Ascending aorta (tissue), 2 donors: ENCODE measurements at regions of chr18 and their contacts with region 1.

Region 1: DNA sequence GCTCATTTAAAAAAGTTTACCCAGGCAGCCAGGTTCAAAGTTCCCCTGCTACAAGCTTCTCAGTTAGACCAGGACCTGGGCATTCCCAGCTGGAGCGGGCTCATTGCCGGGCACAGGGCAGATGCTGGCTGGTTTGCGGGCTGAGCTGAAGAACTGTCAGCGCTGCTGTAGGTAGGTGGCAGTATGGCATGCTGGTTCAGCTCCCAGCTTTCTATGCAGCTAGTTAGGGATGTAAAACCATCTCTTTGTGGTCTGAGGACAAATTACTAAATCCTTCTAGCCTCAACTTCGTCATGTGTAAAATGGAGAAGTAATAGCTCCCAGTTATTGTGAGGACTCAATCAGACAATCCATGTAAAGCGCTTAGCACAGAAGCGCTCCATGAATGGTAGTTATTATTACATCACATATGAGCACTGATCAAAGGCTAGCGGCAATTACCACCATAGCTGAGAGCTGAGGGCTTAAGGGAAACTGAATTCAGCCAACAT is 2.4 kb upstream of the LDLRAD4 start:
- DNase-seq: peak; percentile 43 to 92
- H3K4me3 ChIP-seq: peak overlapping the region; percentile 68 to 91
- H3K27ac ChIP-seq: peak overlapping the region; percentile 69 to 92
- H3K4me1 ChIP-seq: peaks cover 0 to 9% of the 10 kb centered on the region in 2 donors
- H3K27me3 ChIP-seq: no peaks in the 10 kb centered on the region
- CTCF ChIP-seq: peak; percentile 64 to 83 (median 82)

Region 2: DNA sequence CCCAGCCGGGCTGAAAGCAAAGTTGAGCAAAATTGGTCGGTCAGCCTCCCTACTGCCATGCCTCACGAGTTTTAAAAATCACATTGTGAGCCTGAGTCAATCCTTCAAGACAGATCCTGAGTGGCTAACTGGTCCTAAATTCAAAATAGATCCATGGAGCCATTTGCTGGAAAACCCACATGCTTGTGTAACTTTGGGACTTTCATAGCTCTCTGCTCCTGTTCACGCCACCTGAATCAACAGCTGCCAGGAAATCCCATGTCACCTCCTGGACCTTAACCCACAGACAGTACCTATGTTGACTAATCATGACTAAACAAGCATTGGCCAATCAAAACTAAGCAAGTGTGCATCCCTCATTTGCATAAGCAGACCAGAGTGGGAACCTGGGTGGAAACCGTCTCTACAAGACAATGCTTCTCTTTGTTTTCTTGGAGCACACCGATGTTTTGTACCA is 40.4 kb before region 1 on chr18:
- intact Hi-C with region 1: no loop called
- DNase-seq: no peak
- H3K4me3 ChIP-seq: no peak overlapping the region
- H3K27ac ChIP-seq: no peak overlapping the region
- H3K4me1 ChIP-seq: no peaks in the 10 kb centered on the region
- H3K27me3 ChIP-seq: no peaks in the 10 kb centered on the region
- CTCF ChIP-seq: no peak

Region 3: DNA sequence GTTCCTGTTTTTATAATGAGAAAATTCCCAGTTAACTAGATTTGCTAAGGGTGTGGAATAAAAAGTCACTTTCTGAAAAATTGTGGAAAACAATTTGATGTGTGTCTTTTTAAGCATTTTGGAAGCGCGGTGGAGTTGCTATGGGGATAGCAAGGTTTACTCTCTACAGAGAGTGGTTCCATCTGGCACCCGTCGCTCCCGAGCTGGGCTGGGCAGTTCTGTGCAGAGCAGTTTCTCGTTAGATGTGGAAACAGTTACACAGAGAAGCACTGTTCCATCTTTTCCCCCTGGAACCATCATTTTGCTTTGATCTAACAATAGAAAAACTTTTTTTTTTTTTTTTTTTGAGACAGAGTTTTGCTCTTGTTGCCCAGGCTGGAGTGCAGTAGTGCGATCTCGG is 19.8 kb after region 1 on chr18:
- intact Hi-C with region 1: no loop called
- DNase-seq: peak in 1 of 2 donors; percentile 86
- H3K4me3 ChIP-seq: peak overlapping the region; percentile 4 to 21
- H3K27ac ChIP-seq: peak overlapping the region; percentile 61
- H3K4me1 ChIP-seq: peaks cover 0 to 24% of the 10 kb centered on the region in 2 donors
- H3K27me3 ChIP-seq: no peaks in the 10 kb centered on the region
- CTCF ChIP-seq: no peak

Region 4: GRCh38 chr18:13318731-13319501 is 102.8 kb after region 1 on chr18:
- intact Hi-C with region 1: loop called (anchors 2 kb)
- DNase-seq: no peak
- H3K4me3 ChIP-seq: peak overlapping the region in 1 of 2 donors; percentile 1
- H3K27ac ChIP-seq: peak overlapping the region; percentile 83 to 85
- H3K4me1 ChIP-seq: peaks cover 0 to 29% of the 10 kb centered on the region in 2 donors
- H3K27me3 ChIP-seq: no peaks in the 10 kb centered on the region
- CTCF ChIP-seq: no peak

Region 5: GRCh38 chr18:13381944-13382365 is 165.8 kb after region 1 on chr18:
- intact Hi-C with region 1: loop called (anchors 2 kb)
- DNase-seq: peak; percentile 38 to 91
- H3K4me3 ChIP-seq: peak overlapping the region; percentile 35 to 55
- H3K27ac ChIP-seq: peak overlapping the region; percentile 95 to 96
- H3K4me1 ChIP-seq: peaks cover 15 to 52% of the 10 kb centered on the region in 2 donors
- H3K27me3 ChIP-seq: no peaks in the 10 kb centered on the region
- CTCF ChIP-seq: no peak

Region 6: GRCh38 chr18:13530879-13531387 is 314.8 kb after region 1 on chr18:
- intact Hi-C with region 1: loop called (anchors 1 kb)
- DNase-seq: peak; percentile 43 to 89
- H3K4me3 ChIP-seq: peak overlapping the region in 1 of 2 donors; percentile 46
- H3K27ac ChIP-seq: peak overlapping the region; percentile 78 to 81
- H3K4me1 ChIP-seq: peaks cover 5 to 11% of the 10 kb centered on the region in 2 donors
- H3K27me3 ChIP-seq: no peaks in the 10 kb centered on the region
- CTCF ChIP-seq: peak; percentile 75 to 84 (median 77)

Region 7: DNA sequence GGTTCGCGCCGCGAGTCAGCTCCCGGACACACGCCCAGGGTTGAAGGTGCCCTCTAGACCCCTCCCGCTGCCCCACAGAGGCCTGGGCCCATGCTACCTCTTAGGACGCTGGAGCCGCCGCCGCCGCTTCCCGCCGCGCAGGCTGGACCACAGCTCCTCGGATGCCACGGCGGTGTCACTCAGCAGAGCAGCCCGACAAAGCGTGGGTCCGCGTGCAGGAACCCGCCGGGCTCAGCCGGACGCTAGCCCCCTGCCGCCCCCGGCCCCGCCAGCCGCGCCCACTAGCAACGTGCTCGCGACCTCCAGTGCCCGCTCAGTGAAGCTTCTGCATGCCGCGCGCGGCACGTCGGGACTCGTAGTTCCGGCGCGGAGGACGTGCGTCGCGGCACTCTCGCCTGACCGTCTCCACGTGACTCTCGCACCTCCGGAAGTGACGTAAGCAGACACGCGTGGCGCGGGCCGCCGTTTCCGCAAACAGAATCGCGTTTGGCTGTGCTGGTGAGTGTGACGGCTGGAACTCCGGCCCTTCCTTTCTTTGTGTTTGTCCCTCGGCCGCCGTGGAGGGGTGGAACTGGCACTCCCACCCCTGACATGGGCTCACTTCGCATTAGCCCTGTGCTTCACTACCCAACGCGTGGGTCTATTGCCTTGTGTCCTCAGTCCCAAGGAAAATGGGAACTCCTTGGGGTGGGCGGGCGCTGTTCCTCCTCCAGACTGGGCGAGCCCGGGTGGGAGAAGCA is 510.3 kb after region 1 on chr18 and contains the starts of genes FAM210A and RNMT:
- intact Hi-C with region 1: loop called (anchors 1 kb)
- DNase-seq: peak; percentile 87 to 97
- H3K4me3 ChIP-seq: peak within 1 kb of the TSS; percentile 79 to 89
- H3K27ac ChIP-seq: peak within 1 kb of the TSS; percentile 95 to 96
- H3K4me1 ChIP-seq: peaks cover 0 to 13% of the 10 kb centered on the region in 2 donors
- H3K27me3 ChIP-seq: no peaks in the 10 kb centered on the region
- CTCF ChIP-seq: peak in 1 of 3 experiments; percentile 35
- total RNA-seq, gene FAM210A: 2.1 TPM
- total RNA-seq, gene RNMT: 6.4 TPM